Activated CD8-positive, alpha-beta T cell treated with anti-CD3 and anti-CD28 coated beads for 36 hours (primary cell): ENCODE measurements at regions of chr15 and their contacts with region 1.

Region 1: DNA sequence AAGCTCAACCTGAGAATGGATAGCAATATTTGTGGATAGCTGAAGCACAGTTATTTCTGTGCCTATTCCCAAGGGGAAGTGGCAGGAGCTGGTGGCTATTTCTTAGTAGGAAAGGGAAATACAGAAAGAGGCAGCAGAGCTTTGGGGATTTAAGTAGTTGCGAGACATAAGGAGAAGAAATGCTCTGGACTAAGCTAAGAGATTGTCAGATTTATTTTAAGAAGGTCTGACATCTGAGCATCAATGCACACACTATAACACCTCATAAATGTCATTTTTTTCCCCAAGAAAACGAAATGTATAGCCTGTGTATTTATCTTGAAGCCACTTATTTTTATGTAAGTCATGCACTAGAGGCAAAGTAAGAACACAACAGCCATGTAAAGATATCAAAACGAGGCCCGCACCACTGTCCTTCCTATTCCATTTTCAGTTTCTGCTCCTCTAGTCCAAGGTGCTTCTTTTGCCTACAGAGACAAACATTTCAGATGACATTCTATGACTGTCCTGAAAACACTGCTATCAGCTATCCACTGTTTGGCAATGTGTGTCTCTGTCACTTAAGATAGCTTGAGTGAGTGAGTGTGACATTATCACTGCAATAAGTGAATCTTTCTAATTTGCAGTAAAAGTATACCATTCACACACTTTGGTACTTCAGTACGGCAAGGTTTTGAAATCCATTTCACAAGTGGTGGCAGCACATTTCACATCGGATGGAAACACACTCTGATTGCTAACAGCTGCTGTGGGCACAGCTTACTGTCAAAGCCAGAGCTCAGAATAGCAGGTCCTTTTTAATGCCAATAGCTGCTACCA is 62.7 kb upstream of the ICE2 start:
- DNase-seq: peak; percentile 28
- ATAC-seq: peak; percentile 22
- H3K4me3 Mint-ChIP-seq: no peak overlapping the region
- H3K27ac Mint-ChIP-seq: peak overlapping the region; percentile 87
- H3K4me1 Mint-ChIP-seq: peaks cover 93% of the 10 kb centered on the region
- H3K27me3 Mint-ChIP-seq: no peaks in the 10 kb centered on the region
- CTCF ChIP-seq: no peak

Region 2: GRCh38 chr15:60392986-60393790 is 148.5 kb before region 1 on chr15:
- CTCF ChIA-PET with region 1: no interaction called
- POLR2A ChIA-PET with region 1: no interaction called
- intact Hi-C with region 1: no loop called
- DNase-seq: no peak
- ATAC-seq: no peak
- H3K4me3 Mint-ChIP-seq: no peak overlapping the region
- H3K27ac Mint-ChIP-seq: no peak overlapping the region
- H3K4me1 Mint-ChIP-seq: peaks cover 53% of the 10 kb centered on the region
- H3K27me3 Mint-ChIP-seq: peaks cover 3% of the 10 kb centered on the region
- CTCF ChIP-seq: no peak

Region 3: GRCh38 chr15:60464836-60465630 is 76.7 kb before region 1 on chr15:
- CTCF ChIA-PET with region 1: no interaction called
- POLR2A ChIA-PET with region 1: no interaction called
- intact Hi-C with region 1: no loop called
- DNase-seq: no peak
- ATAC-seq: no peak
- H3K4me3 Mint-ChIP-seq: no peak overlapping the region
- H3K27ac Mint-ChIP-seq: no peak overlapping the region
- H3K4me1 Mint-ChIP-seq: peaks cover 5% of the 10 kb centered on the region
- H3K27me3 Mint-ChIP-seq: no peaks in the 10 kb centered on the region
- CTCF ChIP-seq: no peak

Region 4: GRCh38 chr15:60573936-60574335 is 32.2 kb after region 1 on chr15:
- CTCF ChIA-PET with region 1: interaction called, 6 read pairs
- POLR2A ChIA-PET with region 1: interaction called, 13 read pairs
- intact Hi-C with region 1: no loop called
- DNase-seq: peak; percentile 64
- ATAC-seq: peak; percentile 66
- H3K4me3 Mint-ChIP-seq: peak overlapping the region; percentile 42
- H3K27ac Mint-ChIP-seq: peak overlapping the region; percentile 91
- H3K4me1 Mint-ChIP-seq: peaks cover 84% of the 10 kb centered on the region
- H3K27me3 Mint-ChIP-seq: no peaks in the 10 kb centered on the region
- CTCF ChIP-seq: no peak

Region 5: GRCh38 chr15:60643555-60643954 is 101.9 kb after region 1 on chr15:
- CTCF ChIA-PET with region 1: no interaction called
- POLR2A ChIA-PET with region 1: no interaction called
- intact Hi-C with region 1: no loop called
- DNase-seq: no peak
- ATAC-seq: no peak
- H3K4me3 Mint-ChIP-seq: no peak overlapping the region
- H3K27ac Mint-ChIP-seq: no peak overlapping the region
- H3K4me1 Mint-ChIP-seq: peaks cover 4% of the 10 kb centered on the region
- H3K27me3 Mint-ChIP-seq: no peaks in the 10 kb centered on the region
- CTCF ChIP-seq: no peak